ENCODE measurements at regions of chr6 and their contacts with region 1.

Region 1: DNA sequence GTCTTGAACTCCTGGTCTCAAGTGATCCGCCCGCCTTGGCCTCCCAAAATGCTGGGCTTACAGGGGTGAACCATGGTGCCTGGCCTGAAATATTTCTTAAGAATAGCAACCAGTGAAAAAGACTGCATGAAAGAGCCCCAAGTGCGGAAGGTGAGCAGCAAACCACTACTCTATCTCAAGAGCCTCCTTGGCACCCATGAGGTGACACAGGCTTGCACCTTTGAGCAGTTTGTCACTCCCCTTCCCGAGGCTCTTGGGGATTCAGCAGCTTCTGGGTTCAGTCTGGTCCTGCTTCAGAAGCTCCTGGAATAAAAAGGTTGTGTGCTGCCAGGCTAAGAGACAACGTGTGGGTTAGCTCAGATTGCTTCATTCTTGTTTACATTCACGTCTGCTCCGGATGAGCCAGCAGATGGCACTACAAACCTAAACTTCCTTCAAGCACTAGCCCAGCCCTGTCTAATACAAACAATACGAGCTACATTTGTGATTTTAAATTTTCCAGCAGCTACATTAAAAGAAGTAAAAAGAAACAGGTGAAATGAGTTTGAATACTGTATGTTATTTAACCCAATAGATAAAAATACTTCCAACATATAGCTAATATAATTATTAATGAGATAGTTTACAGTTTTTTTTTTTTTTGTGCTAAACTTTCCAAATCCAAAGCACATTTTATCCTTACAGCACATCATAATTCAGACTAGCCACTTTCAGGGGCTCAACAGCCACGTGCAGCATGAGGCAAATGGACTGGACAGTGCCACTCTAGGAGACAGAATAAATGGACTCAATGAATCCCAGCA is 46.2 kb downstream of the GJA10 start:
- DNase-seq: peak; percentile 75
- CTCF ChIP-seq: peak; percentile 65

Region 2: DNA sequence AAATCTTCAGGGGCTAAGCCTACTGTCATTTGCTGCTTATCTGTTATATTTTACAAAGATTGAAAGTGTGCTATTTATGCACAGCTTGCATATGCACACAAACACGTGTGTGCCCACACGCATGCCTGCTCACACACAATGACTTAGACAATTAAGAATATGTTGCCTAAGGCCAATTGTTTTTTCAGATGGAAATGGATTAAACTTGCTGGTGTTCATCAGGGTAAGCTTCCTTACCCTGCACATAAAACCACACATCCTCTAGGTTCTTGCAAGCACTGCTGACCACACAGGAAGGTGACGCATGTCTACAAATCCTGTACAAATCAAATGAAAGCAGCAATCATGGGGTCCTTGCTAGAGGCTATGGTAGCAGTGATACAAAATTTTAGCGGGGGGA is 12.3 kb after region 1 on chr6:
- CTCF ChIA-PET with region 1: interaction called, 25 read pairs
- POLR2A ChIA-PET with region 1: no interaction called
- DNase-seq: no peak
- CTCF ChIP-seq: no peak

Region 3: DNA sequence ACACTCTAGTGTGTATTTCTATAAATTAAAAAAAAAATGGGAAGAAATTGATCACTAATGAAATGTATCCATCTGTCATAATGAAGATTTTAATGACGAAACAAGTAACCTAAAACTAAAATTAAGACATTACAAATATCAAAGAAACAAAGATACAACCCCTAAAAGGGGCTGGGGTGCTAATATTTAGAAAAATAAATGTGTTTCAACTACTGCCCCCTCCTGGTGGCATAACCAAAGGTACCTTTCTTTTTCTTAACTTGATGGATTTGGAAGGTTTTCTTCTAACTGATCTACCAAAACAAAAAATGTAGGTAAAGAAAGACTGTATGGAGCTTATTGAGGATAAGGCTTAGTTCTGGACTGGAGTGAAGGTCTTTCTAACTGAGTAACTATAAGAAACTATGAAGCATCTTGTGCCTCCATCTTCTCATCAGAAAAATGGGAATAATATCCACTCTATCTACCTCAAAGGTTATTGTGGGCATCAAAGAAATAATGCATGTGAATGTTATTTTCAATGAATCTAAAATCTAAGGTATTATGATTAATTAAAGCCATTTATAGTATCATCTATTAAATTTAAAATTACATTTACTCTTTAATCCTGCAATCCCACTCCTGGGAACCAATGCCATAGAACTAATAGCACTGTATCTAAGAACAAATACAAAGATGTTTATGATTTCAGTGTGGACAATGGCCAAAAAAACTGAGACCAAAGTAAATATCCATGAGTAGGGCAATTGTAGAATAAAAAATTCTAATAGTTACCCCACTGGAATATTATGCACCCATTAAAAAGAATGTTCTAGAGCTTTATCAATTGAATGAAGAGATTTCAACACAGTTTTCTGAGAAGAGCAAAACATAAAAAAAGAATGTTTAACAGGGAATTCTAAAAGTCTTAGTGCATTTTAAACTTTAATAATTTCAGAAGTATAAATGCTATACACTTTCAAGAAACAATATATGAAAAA is 239.1 kb after region 1 on chr6:
- CTCF ChIA-PET with region 1: interaction called, 10 read pairs
- POLR2A ChIA-PET with region 1: no interaction called
- DNase-seq: no peak
- CTCF ChIP-seq: no peak

Region 4: GRCh38 chr6:90472744-90473143 is 532.3 kb after region 1 on chr6:
- CTCF ChIA-PET with region 1: interaction called, 136 read pairs
- POLR2A ChIA-PET with region 1: no interaction called
- DNase-seq: no peak
- CTCF ChIP-seq: no peak

Region 5: DNA sequence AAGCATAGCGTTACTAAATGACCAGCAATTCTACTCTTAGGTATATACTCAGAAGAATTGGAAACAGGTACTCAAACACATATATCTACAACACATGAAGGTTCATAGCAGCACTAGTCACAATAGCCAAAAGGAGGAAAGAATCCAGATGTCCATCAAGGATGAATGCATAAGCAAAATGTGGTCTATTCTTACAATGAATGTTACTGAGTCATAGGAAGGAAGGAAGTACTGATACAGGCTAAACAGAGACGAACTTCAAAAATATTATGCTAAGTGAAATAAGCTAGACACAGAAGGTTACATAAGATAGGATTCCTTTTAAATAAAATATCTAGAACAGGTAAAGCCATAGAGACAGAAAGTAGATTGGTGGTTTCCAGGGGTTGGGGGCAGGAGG is 552.9 kb after region 1 on chr6:
- CTCF ChIA-PET with region 1: interaction called, 11 read pairs
- POLR2A ChIA-PET with region 1: no interaction called
- DNase-seq: no peak
- CTCF ChIP-seq: no peak

Measured in GM10248 (cell line).